ENCODE measurements at regions of chrX and their contacts with region 1.

Region 1: DNA sequence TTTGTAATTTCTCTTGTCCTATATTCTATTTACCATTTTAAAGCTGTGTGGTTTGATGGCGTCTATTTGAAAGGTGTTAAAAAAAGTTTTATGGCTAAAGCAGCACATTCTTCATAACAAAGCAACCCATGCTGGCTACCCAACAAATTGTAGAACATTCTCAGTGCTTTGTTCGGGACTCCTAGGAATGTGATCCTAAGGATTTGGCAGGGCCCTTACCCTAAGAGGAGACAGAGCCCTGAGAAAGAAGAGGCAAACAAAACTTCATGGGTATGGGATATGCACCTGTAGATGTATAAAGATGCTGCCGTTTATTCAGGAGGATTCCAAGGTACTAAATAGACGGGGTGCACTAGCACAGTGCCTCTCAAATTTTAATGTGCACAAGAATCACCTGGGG is 370.8 kb upstream of the DIPK2B start:
- DNase-seq: no peak
- ATAC-seq: no peak
- H3K4me3 Mint-ChIP-seq: no peak overlapping the region
- H3K27ac Mint-ChIP-seq: no peak overlapping the region
- H3K4me1 Mint-ChIP-seq: no peaks in the 10 kb centered on the region
- H3K27me3 Mint-ChIP-seq: no peaks in the 10 kb centered on the region

Region 2: DNA sequence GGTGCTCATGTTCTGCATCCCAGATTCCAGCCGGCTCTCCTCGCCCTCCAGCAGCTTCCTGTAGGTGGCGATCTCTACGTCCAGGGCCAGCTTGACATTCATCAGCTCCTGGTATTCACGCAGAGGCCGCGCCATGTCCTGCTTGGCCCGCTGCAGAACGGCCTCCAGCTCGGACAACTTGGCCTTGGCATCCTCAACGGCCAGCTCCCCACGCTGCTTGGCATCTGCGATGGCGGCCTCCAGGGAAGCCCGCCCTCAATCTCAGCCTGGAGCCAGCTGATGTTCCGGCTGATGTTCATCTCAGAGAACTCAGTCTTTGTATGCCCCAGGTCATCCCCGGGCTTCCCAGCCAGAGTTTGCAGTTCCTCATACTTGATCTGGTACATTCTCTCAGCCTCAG is 61.1 kb after region 1 on chrX:
- CTCF ChIA-PET with region 1: no interaction called
- POLR2A ChIA-PET with region 1: no interaction called
- intact Hi-C with region 1: loop called in 1 of 2 experiments (anchors 5 kb)
- DNase-seq: no peak
- ATAC-seq: no peak
- H3K4me3 Mint-ChIP-seq: no peak overlapping the region
- H3K27ac Mint-ChIP-seq: no peak overlapping the region
- H3K4me1 Mint-ChIP-seq: no peaks in the 10 kb centered on the region
- H3K27me3 Mint-ChIP-seq: peaks cover 5% of the 10 kb centered on the region